MCF 10A (cell line): ENCODE measurements at regions of chr1 and their contacts with region 1.

Region 1: DNA sequence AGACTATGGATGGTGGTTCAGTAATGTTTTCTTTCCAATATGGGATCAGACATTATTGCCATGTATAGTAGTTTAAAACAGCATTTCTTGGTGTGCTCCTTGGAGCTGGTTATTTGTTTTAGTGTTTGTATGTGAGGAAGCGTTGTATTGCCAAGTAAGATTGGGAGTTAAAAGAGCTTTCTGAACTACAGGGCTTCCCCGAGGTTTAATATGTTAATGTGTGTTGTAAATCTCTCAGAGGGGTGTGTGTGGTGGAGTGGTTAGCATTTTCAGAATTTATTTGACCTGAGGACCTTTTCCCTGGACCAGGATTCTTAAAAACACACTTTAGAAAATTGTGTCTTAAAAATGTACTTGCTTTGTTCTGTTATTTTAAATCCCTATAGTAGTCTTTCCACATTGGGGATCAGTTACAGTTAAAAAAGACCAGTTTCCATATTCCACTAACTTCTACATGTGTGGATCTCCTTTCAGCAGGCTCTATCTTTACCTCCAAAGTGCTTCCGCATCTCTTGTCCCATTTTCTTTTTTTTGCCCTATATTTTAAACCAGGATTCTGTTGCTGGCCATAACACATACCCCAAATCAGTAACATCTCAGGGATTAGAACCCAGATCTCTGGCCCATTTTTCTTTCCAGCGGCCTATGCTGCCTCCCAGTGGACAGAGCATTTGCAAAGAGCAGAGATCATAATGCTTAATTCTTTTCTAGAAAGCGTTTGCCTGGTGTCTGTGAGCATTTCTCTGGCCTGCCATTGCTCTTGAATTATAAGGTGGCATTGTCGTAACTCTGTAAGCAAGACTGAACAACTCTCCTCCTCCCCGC is 58.6 kb downstream of the PBX1 start:
- DNase-seq: peak; percentile 63
- H3K4me3 Mint-ChIP-seq: no peak overlapping the region
- H3K27ac Mint-ChIP-seq: no peak overlapping the region
- H3K4me1 Mint-ChIP-seq: peaks cover 14% of the 10 kb centered on the region
- H3K27me3 Mint-ChIP-seq: no peaks in the 10 kb centered on the region
- CTCF ChIP-seq: peak; percentile 89

Region 2: DNA sequence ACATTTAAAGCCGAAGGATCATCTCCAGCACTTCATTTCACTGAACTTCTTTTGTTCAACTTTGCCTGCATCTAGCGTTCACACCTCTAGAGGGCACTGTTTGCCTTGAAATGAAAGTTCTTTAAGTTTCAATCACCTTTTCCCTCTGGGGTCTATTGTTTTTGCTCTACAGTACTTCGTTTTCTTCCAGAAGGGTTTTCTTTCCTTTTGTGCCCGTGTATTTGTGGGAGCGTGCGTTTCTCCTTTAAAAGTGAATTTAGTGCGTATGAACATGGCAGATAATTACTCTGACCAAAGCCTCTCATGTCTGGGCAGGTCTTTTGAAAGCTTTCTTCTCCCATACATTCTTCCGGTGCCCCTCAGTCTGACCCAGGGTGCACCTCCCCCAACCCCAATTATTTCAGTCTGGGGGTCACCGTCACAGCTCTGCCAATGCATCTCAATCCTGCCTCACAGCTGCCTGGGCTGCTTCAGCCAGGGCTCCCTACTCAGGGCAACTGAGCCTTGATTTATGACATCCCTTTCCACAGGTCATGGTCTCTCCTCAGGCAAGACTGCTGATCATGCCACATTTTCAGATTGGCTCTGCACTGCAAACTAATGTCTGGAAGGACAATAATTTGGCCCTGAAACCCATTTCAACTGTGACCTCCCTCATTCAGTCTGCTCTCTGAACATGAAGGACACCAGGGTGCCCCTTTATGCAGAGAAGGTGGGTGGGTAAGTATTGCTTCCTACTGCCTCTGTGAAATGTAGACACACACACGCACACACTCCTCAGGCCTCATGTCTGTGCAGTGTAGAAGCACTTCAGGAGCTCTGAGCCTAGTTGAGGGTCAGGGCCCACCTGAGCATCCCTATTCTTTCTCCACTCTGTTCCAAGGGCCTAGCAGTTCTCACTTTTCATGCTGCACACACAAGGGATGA is 1207.3 kb before region 1 on chr1:
- CTCF ChIA-PET with region 1: interaction called, 3 read pairs
- POLR2A ChIA-PET with region 1: no interaction called
- intact Hi-C with region 1: loop called (anchors 1 kb)
- DNase-seq: peak; percentile 75
- H3K4me3 Mint-ChIP-seq: peak overlapping the region; percentile 26
- H3K27ac Mint-ChIP-seq: no peak overlapping the region
- H3K4me1 Mint-ChIP-seq: peaks cover 8% of the 10 kb centered on the region
- H3K27me3 Mint-ChIP-seq: peaks cover 8% of the 10 kb centered on the region
- CTCF ChIP-seq: peak; percentile 91

Region 3: GRCh38 chr1:163561580-163562295 is 1055.9 kb before region 1 on chr1:
- CTCF ChIA-PET with region 1: interaction called, 13 read pairs
- POLR2A ChIA-PET with region 1: no interaction called
- intact Hi-C with region 1: no loop called
- DNase-seq: peak; percentile 51
- H3K4me3 Mint-ChIP-seq: no peak overlapping the region
- H3K27ac Mint-ChIP-seq: no peak overlapping the region
- H3K4me1 Mint-ChIP-seq: no peaks in the 10 kb centered on the region
- H3K27me3 Mint-ChIP-seq: no peaks in the 10 kb centered on the region
- CTCF ChIP-seq: peak; percentile 42

Region 4: GRCh38 chr1:164163289-164163864 is 454.2 kb before region 1 on chr1:
- CTCF ChIA-PET with region 1: interaction called, 6 read pairs
- POLR2A ChIA-PET with region 1: no interaction called
- intact Hi-C with region 1: loop called (anchors 1 kb)
- DNase-seq: no peak
- H3K4me3 Mint-ChIP-seq: no peak overlapping the region
- H3K27ac Mint-ChIP-seq: no peak overlapping the region
- H3K4me1 Mint-ChIP-seq: no peaks in the 10 kb centered on the region
- H3K27me3 Mint-ChIP-seq: no peaks in the 10 kb centered on the region
- CTCF ChIP-seq: no peak

Region 5: DNA sequence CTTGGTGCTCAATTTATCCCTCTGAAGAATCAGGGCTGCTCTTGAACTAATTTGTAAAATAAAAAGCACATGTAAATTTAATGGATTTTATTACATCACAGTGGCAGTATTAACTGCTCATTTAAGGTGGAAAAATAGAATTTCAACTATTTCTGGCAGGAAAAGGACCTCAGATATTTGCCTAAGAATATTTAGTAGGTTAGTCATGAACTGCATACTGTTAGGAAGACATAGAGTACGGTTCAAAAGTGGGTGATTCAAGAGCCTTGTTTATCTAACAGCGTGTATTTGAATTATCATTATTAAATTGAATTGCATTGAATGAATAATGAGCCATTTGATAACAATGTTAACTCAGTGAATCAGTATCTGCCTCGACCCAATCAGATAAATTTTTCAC is 307.4 kb before region 1 on chr1:
- CTCF ChIA-PET with region 1: interaction called, 3 read pairs
- POLR2A ChIA-PET with region 1: no interaction called
- intact Hi-C with region 1: loop called (anchors 10 kb)
- DNase-seq: no peak
- H3K4me3 Mint-ChIP-seq: no peak overlapping the region
- H3K27ac Mint-ChIP-seq: no peak overlapping the region
- H3K4me1 Mint-ChIP-seq: no peaks in the 10 kb centered on the region
- H3K27me3 Mint-ChIP-seq: no peaks in the 10 kb centered on the region
- CTCF ChIP-seq: no peak

Region 6: GRCh38 chr1:164602480-164603093 is 15.0 kb before region 1 on chr1:
- CTCF ChIA-PET with region 1: interaction called, 23 read pairs
- POLR2A ChIA-PET with region 1: interaction called, 22 read pairs
- intact Hi-C with region 1: no loop called
- DNase-seq: peak; percentile 50
- H3K4me3 Mint-ChIP-seq: peak overlapping the region; percentile 13
- H3K27ac Mint-ChIP-seq: peak overlapping the region; percentile 50
- H3K4me1 Mint-ChIP-seq: peaks cover 17% of the 10 kb centered on the region
- H3K27me3 Mint-ChIP-seq: no peaks in the 10 kb centered on the region
- CTCF ChIP-seq: no peak

Region 7: GRCh38 chr1:164667600-164667999 is 50.0 kb after region 1 on chr1:
- CTCF ChIA-PET with region 1: no interaction called
- POLR2A ChIA-PET with region 1: no interaction called
- intact Hi-C with region 1: no loop called
- DNase-seq: no peak
- H3K4me3 Mint-ChIP-seq: no peak overlapping the region
- H3K27ac Mint-ChIP-seq: no peak overlapping the region
- H3K4me1 Mint-ChIP-seq: peaks cover 4% of the 10 kb centered on the region
- H3K27me3 Mint-ChIP-seq: no peaks in the 10 kb centered on the region
- CTCF ChIP-seq: no peak

Region 8: GRCh38 chr1:165050235-165050634 is 432.6 kb after region 1 on chr1:
- CTCF ChIA-PET with region 1: no interaction called
- POLR2A ChIA-PET with region 1: no interaction called
- intact Hi-C with region 1: no loop called
- DNase-seq: peak; percentile 23
- H3K4me3 Mint-ChIP-seq: no peak overlapping the region
- H3K27ac Mint-ChIP-seq: no peak overlapping the region
- H3K4me1 Mint-ChIP-seq: peaks cover 13% of the 10 kb centered on the region
- H3K27me3 Mint-ChIP-seq: peaks cover 21% of the 10 kb centered on the region
- CTCF ChIP-seq: no peak